Ovary (tissue), 10 donors: ENCODE measurements at regions of chr1 and their contacts with region 1.

Region 1: DNA sequence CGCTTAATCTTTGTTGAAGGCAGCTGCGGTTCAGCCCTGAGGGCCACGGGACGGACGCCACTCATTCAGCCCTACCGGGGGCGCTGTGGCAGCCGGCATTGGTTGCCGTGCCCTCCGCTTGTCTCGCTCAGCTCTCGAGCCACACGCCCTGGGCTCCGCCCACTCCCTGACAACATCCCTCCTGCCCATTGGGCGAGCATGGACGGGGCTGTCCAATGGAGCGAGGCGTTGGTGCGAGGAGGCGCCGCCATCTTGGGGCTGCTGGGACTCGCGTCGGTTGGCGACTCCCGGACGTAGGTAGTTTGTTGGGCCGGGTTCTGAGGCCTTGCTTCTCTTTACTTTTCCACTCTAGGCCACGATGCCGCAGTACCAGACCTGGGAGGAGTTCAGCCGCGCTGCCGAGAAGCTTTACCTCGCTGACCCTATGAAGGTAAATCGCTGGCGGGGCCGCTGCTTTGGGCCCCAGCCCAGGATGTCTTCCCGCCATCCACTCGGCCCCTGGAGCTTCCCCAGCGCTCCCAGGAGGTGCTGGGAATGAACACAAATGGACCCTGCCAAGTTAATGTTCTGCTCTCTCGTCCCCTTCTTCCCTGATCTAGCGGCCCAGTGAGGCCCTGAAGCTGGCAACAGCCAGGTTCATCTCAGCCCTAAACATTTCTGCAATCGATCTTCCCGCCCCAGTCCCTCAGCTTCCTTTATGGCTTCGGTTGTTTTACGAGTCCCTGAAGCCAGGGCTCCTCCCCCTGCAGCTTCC is at the start of gene SRP9:
- DNase-seq: peak; percentile 98 to 99 (median 99)
- H3K4me3 ChIP-seq: peak within 1 kb of the TSS; percentile 70
- H3K27ac ChIP-seq: peak within 1 kb of the TSS; percentile 80 to 87
- H3K4me1 ChIP-seq: peaks cover 6% of the 10 kb centered on the region
- H3K27me3 ChIP-seq: no peaks in the 10 kb centered on the region
- CTCF ChIP-seq: peak; percentile 92 to 94 (median 92)
- EP300 ChIP-seq: no peak
- POLR2A ChIP-seq: peak; percentile 97
- total RNA-seq, gene SRP9: 151 to 239 (median 193) TPM

Region 2: DNA sequence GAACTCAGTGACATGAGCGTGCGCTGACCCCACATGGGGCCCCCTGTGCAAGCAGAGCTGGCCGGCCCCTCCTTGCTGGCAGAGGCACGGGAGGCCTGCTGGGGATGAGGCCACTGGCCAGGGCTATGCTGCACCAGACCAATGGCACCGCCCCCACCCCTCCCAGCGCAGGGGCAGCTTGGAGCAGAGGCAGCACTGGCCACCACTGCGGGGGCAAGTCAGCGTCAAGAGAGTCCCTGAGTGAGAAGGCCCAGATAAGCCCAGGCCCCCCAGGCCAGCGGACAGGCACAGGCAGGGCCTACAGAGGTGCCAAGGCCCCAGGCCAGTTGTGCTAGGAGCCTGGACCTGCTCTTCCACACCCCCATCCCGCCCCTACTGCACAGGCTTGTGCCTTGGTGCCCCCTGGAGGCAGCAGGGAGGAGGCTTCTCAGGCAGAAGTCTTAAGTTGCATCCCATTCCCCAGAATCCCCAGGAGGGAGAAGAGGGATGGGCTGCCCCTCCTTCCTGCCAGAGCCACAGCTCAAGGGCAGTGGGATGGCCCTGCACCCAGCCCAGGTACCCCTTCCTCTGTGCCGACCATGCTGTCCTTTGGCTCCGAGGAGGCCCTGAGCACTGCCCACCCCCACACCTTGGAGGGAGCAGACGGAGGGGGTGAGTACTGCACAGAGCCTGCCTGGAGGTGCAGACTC is 68.0 kb after region 1 on chr1:
- intact Hi-C with region 1: loop called in 3 of 4 experiments (anchors 5 kb)
- DNase-seq: peak; percentile 82 to 87 (median 85)
- H3K4me3 ChIP-seq: no peak overlapping the region
- H3K27ac ChIP-seq: peak overlapping the region; percentile 9 to 50
- H3K4me1 ChIP-seq: peaks cover 12% of the 10 kb centered on the region
- H3K27me3 ChIP-seq: no peaks in the 10 kb centered on the region
- CTCF ChIP-seq: peak; percentile 74 to 87 (median 84)
- EP300 ChIP-seq: no peak
- POLR2A ChIP-seq: peak; percentile 13

Region 3: GRCh38 chr1:225881969-225882693 is 104.4 kb after region 1 on chr1 and contains the start of gene TMEM63A:
- intact Hi-C with region 1: loop called in 1 of 4 experiments (anchors 10 kb)
- DNase-seq: peak; percentile 93 to 96 (median 94)
- H3K4me3 ChIP-seq: peak within 1 kb of the TSS; percentile 95
- H3K27ac ChIP-seq: peak within 1 kb of the TSS; percentile 71 to 85
- H3K4me1 ChIP-seq: peaks cover 15% of the 10 kb centered on the region
- H3K27me3 ChIP-seq: no peaks in the 10 kb centered on the region
- CTCF ChIP-seq: peak; percentile 20 to 58 (median 58)
- EP300 ChIP-seq: no peak
- POLR2A ChIP-seq: peak; percentile 41
- total RNA-seq, gene TMEM63A: 42.4 to 82.8 (median 65.5) TPM

Region 4: DNA sequence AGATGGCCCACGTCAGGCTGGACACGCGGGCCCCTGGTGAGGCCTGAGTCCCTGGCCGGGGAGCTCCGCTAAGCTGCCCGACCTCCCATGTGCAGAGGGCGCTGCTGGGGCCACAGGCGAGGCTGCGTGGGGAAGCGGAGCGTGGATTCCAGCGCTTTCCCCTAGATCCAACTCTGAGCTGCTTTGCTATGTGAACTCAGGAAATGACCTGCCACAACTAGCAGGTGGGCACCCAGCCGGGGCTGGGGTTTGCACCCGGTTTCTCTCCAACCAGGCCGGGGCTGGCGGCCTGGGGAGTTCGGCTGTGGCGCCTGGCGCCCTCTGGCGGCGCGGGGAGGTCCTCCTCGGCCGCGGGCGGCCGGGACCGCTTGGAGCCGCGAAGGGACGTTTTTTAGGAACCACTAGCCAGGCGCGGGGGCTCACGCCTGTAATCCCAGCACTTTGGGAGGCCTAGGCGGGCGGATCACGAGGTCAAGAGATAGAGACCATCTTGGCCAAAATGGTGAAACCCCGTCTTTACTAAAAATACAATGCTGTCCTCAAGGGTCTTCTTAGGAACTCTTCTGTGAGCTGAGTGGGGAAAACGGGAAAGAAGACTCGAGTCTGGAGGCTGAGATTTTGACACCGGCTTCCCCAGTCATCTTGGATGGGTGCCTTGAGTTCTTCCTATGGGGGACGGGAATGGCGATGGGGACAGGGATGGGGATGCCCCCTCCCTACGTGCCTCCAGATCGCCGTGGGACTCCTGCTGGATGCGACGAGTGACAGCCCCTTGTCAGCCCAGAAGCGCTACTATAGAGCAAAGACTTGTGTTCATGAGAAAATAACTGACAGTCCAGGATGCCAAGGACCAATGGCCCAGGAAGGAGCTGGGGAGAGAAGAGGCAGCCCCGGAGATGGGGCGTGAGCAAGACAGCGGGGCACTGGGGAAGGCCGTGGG is 133.7 kb after region 1 on chr1:
- intact Hi-C with region 1: loop called in 2 of 4 experiments (anchors 10 kb)
- DNase-seq: peak; percentile 61 to 86 (median 80)
- H3K4me3 ChIP-seq: no peak overlapping the region
- H3K27ac ChIP-seq: no peak overlapping the region
- H3K4me1 ChIP-seq: peaks cover 2% of the 10 kb centered on the region
- H3K27me3 ChIP-seq: no peaks in the 10 kb centered on the region
- CTCF ChIP-seq: peak; percentile 83 to 87 (median 85)
- EP300 ChIP-seq: no peak
- POLR2A ChIP-seq: no peak

Region 5: DNA sequence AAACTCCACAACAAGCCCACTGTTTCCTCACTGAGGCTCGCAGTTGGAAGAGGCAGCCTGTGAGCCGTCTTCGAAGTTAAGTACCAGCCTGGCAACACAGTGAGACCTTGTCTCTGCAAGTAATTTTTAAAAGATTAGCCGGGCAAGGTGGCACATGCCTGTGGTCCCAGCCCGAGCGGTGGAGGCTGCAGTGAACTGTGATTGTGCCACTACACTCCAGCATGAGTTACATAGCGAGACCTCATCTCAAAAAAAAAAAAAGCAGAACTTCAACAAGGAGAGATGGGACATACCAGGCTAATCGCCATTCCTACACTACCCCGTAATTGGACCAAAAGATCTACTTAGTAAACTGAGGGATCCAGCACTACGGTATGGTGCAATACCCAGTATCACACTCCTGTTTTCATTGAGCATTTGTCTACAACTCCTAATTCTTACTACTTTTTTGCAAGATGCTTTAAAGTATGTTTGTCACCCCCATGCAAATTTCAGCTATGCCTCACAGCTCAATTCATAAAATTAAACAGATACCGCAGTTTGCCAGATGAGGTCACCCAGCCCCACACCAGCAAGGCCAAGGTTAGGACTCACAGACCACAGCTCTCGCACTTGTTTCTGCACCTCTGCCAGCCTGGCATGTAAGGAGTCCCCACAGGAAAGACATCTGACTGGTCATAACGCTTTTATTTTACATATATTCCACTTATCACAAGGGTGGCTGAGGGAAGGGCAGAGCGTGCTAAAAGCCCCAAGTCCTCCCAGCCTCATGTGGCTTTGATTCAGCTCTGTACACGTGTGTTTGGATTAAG is 200.4 kb after region 1 on chr1:
- intact Hi-C with region 1: loop called in 3 of 4 experiments (anchors 5 to 10 kb)
- DNase-seq: peak in 1 of 5 donors; percentile 6
- H3K4me3 ChIP-seq: no peak overlapping the region
- H3K27ac ChIP-seq: no peak overlapping the region
- H3K4me1 ChIP-seq: peaks cover 3% of the 10 kb centered on the region
- H3K27me3 ChIP-seq: no peaks in the 10 kb centered on the region
- CTCF ChIP-seq: no peak
- EP300 ChIP-seq: no peak
- POLR2A ChIP-seq: no peak

Region 6: DNA sequence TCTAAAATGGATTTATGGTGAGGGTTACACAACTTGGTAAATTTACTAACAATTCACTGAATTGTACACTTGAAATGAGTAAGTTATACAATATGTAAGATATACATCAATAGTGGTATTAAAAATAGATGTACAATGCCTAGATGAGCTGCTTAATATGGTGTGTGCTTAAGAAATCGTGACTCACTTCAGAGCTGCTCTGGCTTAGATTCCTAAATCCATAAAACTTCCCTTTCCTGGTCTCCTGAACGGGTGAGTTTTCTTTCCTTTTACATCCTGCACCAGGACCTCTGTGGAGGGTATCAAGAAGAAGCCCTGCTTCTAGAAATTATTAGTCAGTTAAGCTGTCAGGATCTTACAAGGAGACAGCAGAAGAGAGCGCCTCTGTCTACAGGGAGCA is 315.2 kb after region 1 on chr1:
- intact Hi-C with region 1: no loop called
- DNase-seq: no peak
- H3K4me3 ChIP-seq: no peak overlapping the region
- H3K27ac ChIP-seq: no peak overlapping the region
- H3K4me1 ChIP-seq: no peaks in the 10 kb centered on the region
- H3K27me3 ChIP-seq: no peaks in the 10 kb centered on the region
- CTCF ChIP-seq: no peak
- EP300 ChIP-seq: no peak
- POLR2A ChIP-seq: no peak